Left cardiac atrium (tissue), 4 donors: ENCODE measurements at regions of chr6 and their contacts with region 1.

Region 1: GRCh38 chr6:33566182-33567084 is 13.6 kb downstream of the BAK1 start:
- DNase-seq: no peak
- ATAC-seq: no peak

Region 2: DNA sequence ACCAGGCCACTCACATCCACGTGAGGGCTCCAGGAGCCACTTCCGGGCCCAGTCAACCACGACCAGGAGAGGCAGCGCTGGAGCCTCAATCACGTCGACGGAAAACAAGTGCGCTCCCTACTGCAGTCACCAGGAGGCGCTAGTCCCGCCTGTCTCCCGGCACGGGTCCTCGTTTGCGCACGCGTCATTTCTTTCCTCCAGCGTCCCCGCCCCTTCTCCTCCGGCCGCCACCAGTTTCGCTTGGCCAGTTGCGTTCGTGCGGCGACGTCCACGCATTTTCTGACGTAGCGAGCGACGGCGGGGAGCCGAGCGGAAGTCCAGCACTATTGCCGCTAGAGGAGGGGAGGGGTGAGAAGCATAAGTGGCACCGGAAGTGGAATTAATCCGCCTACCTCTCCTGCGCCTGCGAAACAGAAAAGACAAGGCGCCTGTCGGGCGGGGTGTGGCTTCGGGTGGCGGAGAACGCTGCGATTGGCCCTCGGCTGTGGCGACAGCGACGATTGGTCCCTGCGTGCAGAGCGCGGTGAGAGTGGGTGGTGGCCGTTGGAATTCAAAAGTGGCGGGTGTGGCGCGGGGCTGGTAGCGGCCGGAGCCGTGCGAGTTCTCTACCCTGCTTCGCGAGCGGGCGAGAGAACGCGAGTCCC is 175.0 kb before region 1 on chr6 and contains the start of gene KIFC1:
- intact Hi-C with region 1: no loop called
- DNase-seq: peak; percentile 99
- ATAC-seq: peak; percentile 99
- total RNA-seq, gene KIFC1: 0.31 to 1.9 TPM

Region 3: DNA sequence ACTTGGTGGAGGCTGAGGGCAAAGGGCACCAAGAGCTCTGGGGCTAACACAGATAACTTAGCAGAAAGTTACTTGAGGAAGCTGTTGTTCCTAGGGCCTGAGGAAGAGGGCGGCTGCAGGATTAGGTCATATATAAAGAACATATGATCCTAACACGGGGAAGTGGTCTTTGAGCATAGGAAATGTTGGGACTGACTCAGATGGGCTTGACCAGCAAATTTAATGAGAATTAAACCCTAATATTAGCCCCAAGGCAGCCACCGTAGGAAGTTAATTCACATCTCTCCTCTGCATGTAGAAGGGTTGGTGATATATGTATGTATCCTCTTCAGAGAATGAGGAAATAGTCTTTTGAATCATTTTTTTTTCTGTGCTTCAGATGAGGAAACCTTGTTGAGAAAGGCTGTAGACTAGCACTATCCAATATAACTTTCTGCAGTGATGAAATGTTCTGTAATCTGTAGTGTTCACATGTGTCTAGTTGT is 121.3 kb before region 1 on chr6:
- intact Hi-C with region 1: loop called (anchors 10 kb)
- DNase-seq: no peak
- ATAC-seq: no peak